Right ventricle myocardium inferior (tissue), 1 donor: ENCODE measurements at regions of chr16 and their contacts with region 1.

Region 1: GRCh38 chr16:30893744-30894539 is at the start of gene BCL7C:
- DNase-seq: peak; percentile 97
- ATAC-seq: peak; percentile 88
- total RNA-seq, gene BCL7C: 32.2 TPM

Region 2: DNA sequence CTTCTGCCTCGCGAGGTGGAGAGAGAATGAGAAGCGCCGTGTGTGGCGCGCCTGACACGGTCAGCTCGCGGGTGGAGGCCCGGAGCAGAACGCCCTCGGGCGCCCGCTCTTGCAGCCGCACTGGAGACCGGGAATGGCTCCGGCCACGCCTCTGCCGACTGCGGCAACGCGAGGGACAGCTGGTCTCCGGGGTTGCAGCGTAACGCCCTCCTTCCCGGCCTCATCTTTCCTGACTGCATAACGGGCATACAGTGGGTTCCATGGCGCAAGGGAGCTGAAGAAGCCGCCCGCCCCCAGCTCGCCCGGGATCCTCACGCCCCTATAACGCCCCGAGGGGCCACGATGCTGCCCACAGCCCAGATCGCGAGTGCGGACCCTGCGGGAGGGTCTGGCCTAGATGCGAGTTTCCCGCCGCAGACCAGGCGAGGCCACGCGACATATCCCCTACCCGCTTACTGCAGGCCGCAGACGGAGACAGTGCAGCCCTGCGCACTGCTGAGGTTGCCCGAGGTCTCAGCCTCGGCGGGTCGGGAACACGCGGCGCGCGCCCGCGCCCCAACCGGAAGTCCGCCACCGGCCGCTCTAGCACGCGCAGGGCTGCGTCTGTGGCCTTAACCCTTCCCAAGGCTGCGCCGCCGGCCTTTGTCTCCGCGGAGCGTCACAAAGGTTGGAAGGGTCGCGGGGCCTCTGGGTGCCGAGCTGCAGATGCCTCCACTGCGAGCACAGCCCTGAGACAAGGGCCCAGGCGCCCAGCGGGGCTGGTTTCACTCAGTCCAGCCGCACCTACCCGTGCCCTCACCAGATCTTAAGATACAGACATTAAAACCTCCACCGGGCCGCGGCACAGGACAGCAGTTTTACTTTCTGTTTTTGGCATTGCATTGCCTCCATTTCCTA is 18.9 kb before region 1 on chr16:
- intact Hi-C with region 1: loop called (anchors 2 kb)
- DNase-seq: peak; percentile 97
- ATAC-seq: peak; percentile 99